ENCODE measurements at regions of chr15 and their contacts with region 1.

Region 1: DNA sequence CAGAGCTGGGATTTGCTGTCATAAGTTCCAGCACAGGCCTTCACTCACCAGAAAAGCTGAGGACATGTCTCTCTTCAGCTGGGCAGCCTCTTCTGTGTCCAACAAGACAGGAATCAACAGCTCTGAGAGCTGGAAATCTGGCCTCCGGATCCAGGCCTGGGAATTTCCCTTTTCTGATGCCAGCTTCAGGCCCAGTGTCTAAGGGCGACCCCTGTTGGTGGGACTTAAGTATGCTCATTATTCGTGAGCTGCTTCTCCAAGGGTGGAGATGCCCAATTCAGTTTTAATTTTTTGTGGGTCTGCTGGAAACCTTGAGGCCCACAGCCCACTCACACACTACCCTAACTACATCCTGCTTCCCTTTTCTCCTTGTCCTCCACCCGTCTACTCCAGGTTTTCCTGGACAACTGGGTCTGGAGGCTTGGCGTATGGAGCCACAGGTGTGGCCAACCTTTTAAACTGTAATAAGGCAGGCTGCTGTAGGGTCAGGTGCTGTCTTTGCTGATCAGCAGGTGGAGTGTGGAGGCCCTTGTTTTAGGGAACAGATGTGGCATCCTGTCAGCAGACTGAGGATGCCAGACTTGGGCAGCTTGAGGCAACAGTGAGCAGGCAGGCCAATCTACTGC is 2.6 kb upstream of the CEMIP start:
- DNase-seq: peak; percentile 82
- ATAC-seq: no peak
- H3K4me3 Mint-ChIP-seq: no peak overlapping the region
- H3K27ac Mint-ChIP-seq: no peak overlapping the region
- H3K4me1 Mint-ChIP-seq: peaks cover 6% of the 10 kb centered on the region
- H3K27me3 Mint-ChIP-seq: peaks cover 44% of the 10 kb centered on the region

Region 2: GRCh38 chr15:80455668-80456442 is 320.7 kb before region 1 on chr15:
- CTCF ChIA-PET with region 1: interaction called, 51 read pairs
- POLR2A ChIA-PET with region 1: interaction called, 3 read pairs
- intact Hi-C with region 1: loop called (anchors 1 kb)
- DNase-seq: peak; percentile 74
- ATAC-seq: peak; percentile 73
- H3K4me3 Mint-ChIP-seq: no peak overlapping the region
- H3K27ac Mint-ChIP-seq: no peak overlapping the region
- H3K4me1 Mint-ChIP-seq: no peaks in the 10 kb centered on the region
- H3K27me3 Mint-ChIP-seq: peaks cover 9% of the 10 kb centered on the region

Region 3: DNA sequence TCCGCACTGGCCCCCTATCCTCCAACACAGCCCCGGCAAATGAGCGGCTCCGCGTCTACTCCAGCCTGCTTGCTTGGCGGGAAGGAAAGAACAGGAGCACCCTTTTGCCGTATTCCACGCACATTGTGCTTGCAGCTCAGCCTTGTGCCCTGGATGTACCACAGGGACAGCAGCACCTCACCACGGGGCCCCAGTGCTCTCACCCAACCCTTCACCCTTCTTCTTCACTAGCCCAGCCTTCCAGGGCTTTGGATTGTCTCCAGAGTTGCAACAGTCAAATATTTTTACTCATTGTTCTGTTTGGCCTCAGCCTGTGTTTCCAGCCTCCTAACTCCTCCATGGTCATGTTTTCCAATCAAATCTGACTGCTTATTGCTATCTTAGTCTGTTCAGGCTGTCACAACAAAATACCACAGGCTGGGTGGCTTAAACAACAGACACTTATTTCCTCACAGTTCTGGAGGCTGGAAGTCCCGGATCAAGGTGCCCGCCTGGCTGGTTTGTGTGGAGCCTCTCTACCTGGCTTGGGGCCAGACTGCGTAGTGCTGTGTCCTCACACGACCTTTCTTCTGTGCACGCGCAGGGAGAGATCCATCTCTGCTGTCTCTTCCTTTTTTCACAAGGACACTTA is 160.7 kb before region 1 on chr15:
- CTCF ChIA-PET with region 1: interaction called, 5 read pairs
- POLR2A ChIA-PET with region 1: no interaction called
- intact Hi-C with region 1: loop called in 1 of 2 experiments (anchors 5 kb)
- DNase-seq: no peak
- ATAC-seq: no peak
- H3K4me3 Mint-ChIP-seq: no peak overlapping the region
- H3K27ac Mint-ChIP-seq: no peak overlapping the region
- H3K4me1 Mint-ChIP-seq: no peaks in the 10 kb centered on the region
- H3K27me3 Mint-ChIP-seq: peaks cover 21% of the 10 kb centered on the region

Region 4: DNA sequence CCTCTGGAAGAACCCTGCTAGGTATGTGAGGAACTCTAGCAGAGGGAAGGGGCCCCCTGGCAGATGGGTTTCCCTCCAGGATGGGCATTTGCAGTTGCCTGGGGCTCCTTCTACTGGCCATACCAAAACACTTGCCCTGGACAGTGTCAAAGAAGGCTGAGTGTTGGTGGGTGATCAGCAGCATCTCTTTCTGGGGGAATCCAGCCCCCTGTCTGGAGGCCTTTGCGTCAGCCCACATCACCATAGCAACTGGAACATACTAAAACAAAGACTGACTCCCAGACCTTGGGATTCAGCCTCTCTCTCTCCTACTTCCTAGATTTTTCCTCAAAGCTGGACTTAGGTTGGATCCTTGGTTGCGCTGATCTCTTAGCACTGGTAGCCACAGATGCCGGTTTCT is 10.8 kb after region 1 on chr15:
- CTCF ChIA-PET with region 1: interaction called, 23 read pairs
- POLR2A ChIA-PET with region 1: no interaction called
- intact Hi-C with region 1: no loop called
- DNase-seq: no peak
- ATAC-seq: no peak
- H3K4me3 Mint-ChIP-seq: no peak overlapping the region
- H3K27ac Mint-ChIP-seq: no peak overlapping the region
- H3K4me1 Mint-ChIP-seq: peaks cover 10% of the 10 kb centered on the region
- H3K27me3 Mint-ChIP-seq: peaks cover 15% of the 10 kb centered on the region

Region 5: DNA sequence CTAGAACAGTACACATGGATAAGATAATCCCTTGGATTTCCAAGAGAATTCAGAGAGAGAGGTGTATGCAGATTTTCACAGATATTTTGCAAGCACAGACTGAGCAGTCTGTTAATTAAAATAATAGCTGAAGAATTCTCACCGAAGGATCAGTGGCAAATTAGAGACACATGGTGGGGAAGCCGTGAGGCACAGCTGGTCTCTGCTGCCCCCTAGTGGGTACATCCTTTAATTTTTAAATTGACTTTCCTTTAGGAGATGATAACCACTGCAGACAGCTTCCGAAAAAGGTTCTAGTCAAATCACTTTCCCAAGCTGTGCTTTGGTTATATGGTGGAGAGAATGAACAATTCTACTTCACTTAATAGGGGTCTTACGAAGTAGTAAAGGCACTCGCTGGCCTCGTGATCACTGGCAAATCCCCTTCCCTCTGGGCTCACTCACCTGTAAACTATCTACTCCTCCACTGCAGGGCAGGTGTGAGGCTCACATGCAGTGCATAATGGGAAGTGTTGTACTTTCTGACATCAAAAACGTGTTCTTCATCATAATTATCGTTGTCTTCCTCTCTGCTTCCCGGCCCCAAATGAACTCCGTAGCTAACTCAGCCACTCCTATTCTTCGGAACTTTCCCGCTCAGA is 193.6 kb after region 1 on chr15:
- CTCF ChIA-PET with region 1: interaction called, 20 read pairs
- POLR2A ChIA-PET with region 1: no interaction called
- intact Hi-C with region 1: loop called (anchors 1 to 5 kb)
- DNase-seq: peak; percentile 76
- ATAC-seq: peak; percentile 74
- H3K4me3 Mint-ChIP-seq: no peak overlapping the region
- H3K27ac Mint-ChIP-seq: no peak overlapping the region
- H3K4me1 Mint-ChIP-seq: peaks cover 4% of the 10 kb centered on the region
- H3K27me3 Mint-ChIP-seq: no peaks in the 10 kb centered on the region

Measured in activated CD4-positive, alpha-beta T cell treated with anti-CD3 and anti-CD28 coated beads for 36 hours (primary cell).